HEK293 (cell line): ENCODE measurements at regions of chr5 and their contacts with region 1.

Region 1: DNA sequence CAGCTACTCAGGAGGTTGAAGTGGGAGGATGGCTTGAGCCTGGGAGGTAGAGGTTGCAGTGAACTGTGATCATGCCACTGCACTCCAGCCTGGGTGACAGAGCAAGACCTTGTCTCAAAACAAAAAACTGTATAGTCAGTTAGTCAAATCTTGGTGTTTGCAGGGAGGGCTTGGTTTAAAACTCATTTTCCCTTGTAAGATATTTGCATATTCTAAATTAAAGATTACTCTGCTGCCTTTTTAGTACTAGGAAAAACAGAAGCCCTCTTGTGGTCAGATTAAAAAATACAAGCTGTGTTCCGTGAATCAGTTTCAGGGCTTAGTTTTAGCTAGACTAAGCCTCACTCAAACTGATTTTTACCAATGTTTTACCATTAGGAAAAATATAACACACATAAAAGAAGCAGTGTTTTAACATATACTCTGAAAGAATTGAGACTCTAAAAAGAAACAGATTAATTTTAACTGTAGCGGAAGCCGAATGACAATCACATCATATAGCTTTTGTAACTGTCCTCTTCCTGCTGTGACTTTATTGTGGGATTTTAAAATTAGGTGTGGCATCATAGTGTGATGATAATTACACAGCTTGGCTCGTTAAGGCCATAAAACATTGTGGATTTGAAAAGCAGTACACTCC is 84.9 kb upstream of the BASP1 start:
- H3K4me3 ChIP-seq: no peak overlapping the region
- H3K27ac ChIP-seq: no peak overlapping the region
- H3K4me1 ChIP-seq: no peaks in the 10 kb centered on the region
- CTCF ChIP-seq: no peak

Region 2: DNA sequence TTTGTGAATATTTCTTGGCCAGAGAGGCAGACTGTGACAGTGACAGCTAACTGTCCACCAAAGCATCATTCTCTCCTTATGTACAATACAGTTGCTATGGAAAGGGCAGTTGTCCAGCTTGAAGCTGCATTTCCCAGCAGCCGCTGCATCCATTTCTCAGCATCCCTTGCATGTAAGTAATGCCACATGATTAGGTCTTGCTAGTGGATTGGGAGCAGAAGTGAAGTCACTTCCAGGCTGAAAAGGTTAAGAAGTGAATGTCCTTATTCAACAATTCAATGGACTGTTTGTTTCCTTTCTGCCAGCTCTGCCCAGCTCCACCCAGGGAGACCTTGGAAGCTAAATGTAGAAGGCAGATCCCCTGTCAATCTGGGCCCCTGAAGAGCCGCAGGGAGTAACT is 489.7 kb before region 1 on chr5:
- CTCF ChIA-PET with region 1: no interaction called
- POLR2A ChIA-PET with region 1: no interaction called
- H3K4me3 ChIP-seq: no peak overlapping the region
- H3K27ac ChIP-seq: no peak overlapping the region
- H3K4me1 ChIP-seq: no peaks in the 10 kb centered on the region
- CTCF ChIP-seq: no peak

Region 3: DNA sequence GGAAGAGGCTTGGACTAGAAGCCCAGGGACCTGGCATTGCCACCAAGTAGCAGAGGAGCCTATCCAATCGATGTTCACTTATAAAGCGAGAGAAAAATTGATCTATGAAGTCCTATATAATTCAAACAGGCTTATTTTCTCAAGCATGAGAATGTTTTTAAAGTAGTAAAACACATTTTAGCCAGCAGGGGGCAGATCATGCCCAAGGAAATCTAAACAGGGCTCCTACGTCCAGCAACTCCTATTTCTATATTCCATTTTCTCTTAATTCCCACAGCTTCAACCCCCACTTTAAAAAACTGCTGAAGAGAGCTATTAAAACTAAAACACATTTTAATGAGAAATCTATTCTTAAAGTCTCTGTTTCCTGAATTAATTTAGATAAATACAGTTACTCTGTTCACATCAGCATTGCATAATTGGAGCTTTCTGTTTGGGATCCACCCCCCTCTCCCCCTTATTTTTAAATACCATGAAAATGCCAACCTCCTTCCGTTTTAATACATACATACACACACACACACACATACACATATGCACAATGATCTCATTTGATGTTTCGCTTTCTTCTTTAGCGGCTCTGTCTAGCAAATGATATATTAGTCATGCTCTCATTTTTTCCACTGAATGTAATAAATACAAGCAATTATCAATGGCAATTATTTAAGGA is 341.4 kb before region 1 on chr5:
- CTCF ChIA-PET with region 1: interaction called, 25 read pairs
- POLR2A ChIA-PET with region 1: no interaction called
- H3K4me3 ChIP-seq: no peak overlapping the region
- H3K27ac ChIP-seq: no peak overlapping the region
- H3K4me1 ChIP-seq: peaks cover 8% of the 10 kb centered on the region; the same call in 1 of the 2 replicates
- CTCF ChIP-seq: no peak

Region 4: DNA sequence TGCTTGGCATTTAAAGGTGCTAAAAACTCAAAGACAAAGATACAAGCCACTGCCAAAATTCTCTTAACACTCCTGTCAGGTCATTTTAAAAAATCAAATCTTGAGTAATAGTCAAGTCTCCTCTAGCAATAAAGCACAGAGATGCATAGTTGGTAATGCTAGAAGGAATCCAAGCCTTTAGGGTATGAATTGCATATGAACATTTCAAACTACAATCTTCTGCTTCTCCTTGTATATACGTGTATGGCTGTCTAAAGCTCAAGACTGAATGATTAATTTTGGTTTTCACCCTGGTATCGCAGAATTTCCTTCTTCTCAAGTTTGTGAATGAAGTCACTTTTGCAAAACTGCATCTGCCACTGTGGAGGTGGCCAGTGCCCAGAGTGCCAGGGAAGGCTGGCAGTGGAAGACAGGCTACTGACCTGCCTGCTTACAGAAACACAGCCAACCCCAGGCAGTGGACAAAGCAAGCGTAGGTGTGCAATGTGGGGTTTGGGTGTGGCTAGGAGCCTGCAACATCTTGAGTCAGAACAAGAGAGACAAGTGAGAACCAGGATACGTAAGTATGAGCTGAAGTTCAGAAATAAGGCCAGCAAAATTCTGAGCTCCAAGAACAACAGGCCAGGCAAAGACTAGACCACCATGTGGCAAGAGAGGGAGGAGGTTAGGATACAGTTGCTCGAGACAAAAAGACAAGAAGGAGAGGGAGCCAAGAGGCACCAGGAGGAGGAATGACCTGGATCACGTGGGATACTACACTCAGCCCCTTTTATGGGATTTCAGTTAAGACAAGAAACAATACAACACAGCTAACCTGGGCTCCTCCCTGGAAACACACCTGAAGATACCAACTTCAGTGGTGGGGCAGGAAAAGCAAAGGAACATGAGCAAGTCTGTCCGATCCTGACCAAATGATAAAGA is 219.1 kb before region 1 on chr5:
- CTCF ChIA-PET with region 1: interaction called, 10 read pairs
- POLR2A ChIA-PET with region 1: no interaction called
- H3K4me3 ChIP-seq: no peak overlapping the region
- H3K27ac ChIP-seq: no peak overlapping the region; the same call in 1 of the 2 replicates
- H3K4me1 ChIP-seq: peaks cover 31% of the 10 kb centered on the region
- CTCF ChIP-seq: no peak

Region 5: DNA sequence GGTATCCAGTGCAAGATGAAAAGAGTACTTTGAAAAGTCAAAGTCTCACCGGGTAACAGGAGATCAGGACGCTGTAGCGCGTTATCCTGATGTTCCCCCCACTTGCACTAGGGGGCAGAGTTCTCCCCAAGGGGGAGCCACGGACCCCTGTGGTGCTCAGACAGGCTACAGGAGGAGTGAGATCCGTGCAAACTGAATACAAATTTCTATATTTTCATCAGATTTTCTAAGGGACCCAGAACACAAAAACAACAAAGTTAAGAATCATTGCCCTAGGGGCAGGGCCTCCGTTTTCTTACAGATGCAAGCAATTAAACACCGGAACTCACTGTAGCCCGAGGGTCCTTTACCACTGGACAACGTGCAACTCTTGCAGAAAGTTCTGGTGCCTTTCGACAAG is 198.4 kb before region 1 on chr5:
- CTCF ChIA-PET with region 1: interaction called, 37 read pairs
- POLR2A ChIA-PET with region 1: interaction called, 3 read pairs
- H3K4me3 ChIP-seq: peak overlapping the region; percentile 95
- H3K27ac ChIP-seq: no peak overlapping the region
- H3K4me1 ChIP-seq: peaks cover 35% of the 10 kb centered on the region
- CTCF ChIP-seq: peak; percentile 80

Region 6: GRCh38 chr5:17113163-17113958 is 19.2 kb before region 1 on chr5:
- CTCF ChIA-PET with region 1: interaction called, 28 read pairs
- POLR2A ChIA-PET with region 1: interaction called, 3 read pairs
- H3K4me3 ChIP-seq: no peak overlapping the region
- H3K27ac ChIP-seq: no peak overlapping the region
- H3K4me1 ChIP-seq: peaks cover 16% of the 10 kb centered on the region
- CTCF ChIP-seq: no peak

Region 7: GRCh38 chr5:17118631-17119030 is 13.9 kb before region 1 on chr5:
- CTCF ChIA-PET with region 1: interaction called, 28 read pairs
- POLR2A ChIA-PET with region 1: no interaction called
- H3K4me3 ChIP-seq: no peak overlapping the region
- H3K27ac ChIP-seq: no peak overlapping the region
- H3K4me1 ChIP-seq: peaks cover 19% of the 10 kb centered on the region
- CTCF ChIP-seq: no peak

Region 8: GRCh38 chr5:17151686-17152085 is 19.1 kb after region 1 on chr5:
- CTCF ChIA-PET with region 1: interaction called, 31 read pairs
- POLR2A ChIA-PET with region 1: no interaction called
- H3K4me3 ChIP-seq: no peak overlapping the region
- H3K27ac ChIP-seq: no peak overlapping the region
- H3K4me1 ChIP-seq: no peaks in the 10 kb centered on the region
- CTCF ChIP-seq: no peak

Region 9: DNA sequence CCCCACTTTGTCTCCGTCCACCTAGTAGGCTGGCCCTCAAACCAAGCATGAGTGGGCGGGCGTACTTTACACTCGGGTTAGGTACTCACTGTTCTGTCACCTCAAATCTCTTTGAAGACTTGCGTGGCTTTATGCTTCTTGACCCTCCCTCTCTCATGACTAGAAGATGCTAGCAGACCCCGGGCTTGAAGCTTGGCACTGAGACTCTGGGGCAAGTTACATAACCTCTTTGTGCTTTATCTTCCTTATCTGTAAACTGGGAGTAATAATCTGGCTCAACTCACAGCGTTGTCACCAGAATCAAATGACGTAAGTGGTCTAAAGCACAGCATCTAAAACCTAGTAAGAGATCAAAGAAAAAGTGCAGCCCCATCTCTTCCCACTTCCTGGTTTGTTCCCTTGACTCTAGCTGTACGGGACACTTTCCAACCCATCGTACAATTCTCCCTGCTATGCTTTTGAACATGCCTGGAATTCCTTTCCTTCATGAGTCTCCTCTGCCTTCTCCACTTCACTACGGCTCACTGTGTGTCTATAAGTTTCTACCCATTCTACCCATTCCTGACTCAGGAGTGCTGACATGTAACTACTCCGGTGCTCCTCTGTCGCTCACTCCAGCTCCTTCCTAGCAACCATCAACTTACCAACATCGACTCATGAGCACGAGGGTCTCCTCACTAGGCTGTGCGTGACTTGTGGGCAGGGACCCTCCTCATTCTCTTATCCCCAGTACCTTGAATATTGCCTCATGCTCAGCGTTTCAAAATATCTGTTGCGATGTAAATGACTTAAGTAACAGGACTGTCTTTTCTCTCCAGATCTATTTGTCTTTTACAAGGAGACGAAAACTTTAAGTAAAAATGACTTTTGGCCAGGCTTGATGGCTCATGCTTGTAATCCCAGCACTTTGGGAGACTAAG is 157.8 kb after region 1 on chr5:
- CTCF ChIA-PET with region 1: no interaction called
- POLR2A ChIA-PET with region 1: no interaction called
- H3K4me3 ChIP-seq: no peak overlapping the region
- H3K27ac ChIP-seq: no peak overlapping the region
- H3K4me1 ChIP-seq: 0 out of 2 replicates have a peak, but pooled peaks cover 2% of the 10 kb centered on the region
- CTCF ChIP-seq: no peak

Region 10: DNA sequence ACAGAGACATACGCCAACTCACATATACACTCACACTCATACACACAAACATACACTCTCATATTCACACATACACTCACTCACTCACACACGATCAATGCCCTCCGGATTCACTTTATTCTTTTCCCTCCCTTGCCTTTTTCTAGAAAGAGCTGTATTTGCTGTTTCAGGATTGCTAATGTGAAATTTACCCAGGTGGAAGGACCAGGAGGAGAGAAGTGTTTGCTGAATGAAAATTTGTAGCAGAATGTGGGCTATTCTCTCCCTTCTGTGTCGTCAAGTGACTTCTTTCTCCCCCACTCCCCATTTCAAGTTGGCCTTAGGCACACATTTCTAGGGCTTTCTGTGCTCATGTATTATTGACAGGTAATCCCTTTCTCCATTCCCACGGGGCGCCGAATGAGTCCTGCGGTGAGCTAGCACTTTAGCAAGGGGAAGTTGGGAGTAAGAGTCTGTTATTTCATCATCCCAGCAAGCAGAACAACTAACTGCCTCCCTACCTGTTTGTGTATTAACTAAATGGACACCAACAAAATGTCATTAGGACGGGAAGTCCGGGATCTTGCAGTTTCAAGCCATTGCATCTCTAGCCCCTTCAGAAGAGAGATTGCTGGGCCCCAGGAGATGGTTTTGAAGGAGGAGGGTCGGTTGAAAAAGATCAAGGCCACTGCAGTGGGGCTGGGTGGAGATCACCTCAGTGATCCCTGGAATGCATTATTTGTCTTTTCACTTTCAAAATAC is 268.3 kb after region 1 on chr5:
- CTCF ChIA-PET with region 1: no interaction called
- POLR2A ChIA-PET with region 1: no interaction called
- H3K4me3 ChIP-seq: no peak overlapping the region
- H3K27ac ChIP-seq: peak overlapping the region; percentile 25; the same call in 1 of the 2 replicates
- H3K4me1 ChIP-seq: peaks cover 32% of the 10 kb centered on the region
- CTCF ChIP-seq: no peak